ENCODE measurements at regions of chr4 and their contacts with region 1.

Region 1: GRCh38 chr4:73662709-73663546 is 42.7 kb upstream of the RASSF6 start:
- DNase-seq: peak in 3 of 4 experiments; percentile 19 to 58 (median 51)
- ATAC-seq: peak; percentile 89
- H3K4me3 ChIP-seq: no peak overlapping the region
- H3K27ac ChIP-seq: no peak overlapping the region
- H3K4me1 ChIP-seq: no peaks in the 10 kb centered on the region; a peak in 1 of 5 replicates
- H3K27me3 ChIP-seq: no peaks in the 10 kb centered on the region
- CTCF ChIP-seq: peak; percentile 48 to 81 (median 61); a peak in 5 of 6 replicates
- EP300 ChIP-seq: no peak
- POLR2A ChIP-seq: no peak
- RAD21 ChIP-seq: peak; percentile 87 to 89

Region 2: GRCh38 chr4:73606465-73606974 is 56.4 kb before region 1 on chr4:
- CTCF ChIA-PET with region 1: no interaction called
- POLR2A ChIA-PET with region 1: no interaction called
- in situ Hi-C with region 1: no loop called
- intact Hi-C with region 1: no loop called
- DNase-seq: no peak
- ATAC-seq: no peak
- H3K4me3 ChIP-seq: no peak overlapping the region
- H3K27ac ChIP-seq: no peak overlapping the region
- H3K4me1 ChIP-seq: no peaks in the 10 kb centered on the region
- H3K27me3 ChIP-seq: peaks cover 0 to 4% of the 10 kb centered on the region in 2 experiments; a peak in 1 of 5 replicates
- CTCF ChIP-seq: no peak
- EP300 ChIP-seq: no peak
- POLR2A ChIP-seq: no peak
- RAD21 ChIP-seq: no peak

Region 3: DNA sequence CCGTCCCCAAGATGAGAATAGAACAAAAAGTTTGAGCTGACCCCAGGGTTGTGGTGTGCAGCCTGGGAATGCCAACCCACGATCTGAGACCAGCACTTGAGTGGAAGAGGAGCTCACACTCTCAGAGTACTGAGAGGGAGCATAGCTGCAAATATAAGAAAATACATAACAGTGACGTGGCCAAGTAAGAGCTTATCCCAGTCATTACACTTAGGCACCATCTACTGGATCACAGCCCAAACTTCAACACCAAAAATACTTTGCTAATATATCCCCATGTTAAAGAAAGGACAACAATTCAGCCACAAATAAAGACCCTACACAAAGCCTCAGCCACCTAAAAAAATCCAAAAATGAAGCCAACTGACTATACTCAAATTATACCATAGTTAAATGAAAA is 140.3 kb after region 1 on chr4:
- CTCF ChIA-PET with region 1: no interaction called
- POLR2A ChIA-PET with region 1: no interaction called
- in situ Hi-C with region 1: no loop called
- intact Hi-C with region 1: loop called (anchors 1 kb)
- DNase-seq: peak in 1 of 4 experiments; percentile 12
- ATAC-seq: peak; percentile 75
- H3K4me3 ChIP-seq: no peak overlapping the region
- H3K27ac ChIP-seq: no peak overlapping the region
- H3K4me1 ChIP-seq: no peaks in the 10 kb centered on the region; a peak in 1 of 5 replicates
- H3K27me3 ChIP-seq: no peaks in the 10 kb centered on the region
- CTCF ChIP-seq: peak in 2 of 3 experiments; percentile 38 to 40; a peak in 3 of 6 replicates
- EP300 ChIP-seq: no peak
- POLR2A ChIP-seq: no peak
- RAD21 ChIP-seq: peak in 1 of 2 experiments; percentile 57; a peak in 2 of 4 replicates

Region 4: GRCh38 chr4:73922766-73923630 is 260.1 kb after region 1 on chr4:
- CTCF ChIA-PET with region 1: interaction called, 8 read pairs
- POLR2A ChIA-PET with region 1: no interaction called
- in situ Hi-C with region 1: no loop called
- intact Hi-C with region 1: loop called (anchors 1 kb)
- DNase-seq: peak in 1 of 4 experiments; percentile 36
- ATAC-seq: no peak
- H3K4me3 ChIP-seq: no peak overlapping the region
- H3K27ac ChIP-seq: no peak overlapping the region
- H3K4me1 ChIP-seq: no peaks in the 10 kb centered on the region; a peak in 1 of 5 replicates
- H3K27me3 ChIP-seq: no peaks in the 10 kb centered on the region
- CTCF ChIP-seq: peak in 1 of 3 experiments; percentile 58; a peak in 3 of 6 replicates
- EP300 ChIP-seq: no peak
- POLR2A ChIP-seq: no peak
- RAD21 ChIP-seq: peak; percentile 61 to 76

Region 5: DNA sequence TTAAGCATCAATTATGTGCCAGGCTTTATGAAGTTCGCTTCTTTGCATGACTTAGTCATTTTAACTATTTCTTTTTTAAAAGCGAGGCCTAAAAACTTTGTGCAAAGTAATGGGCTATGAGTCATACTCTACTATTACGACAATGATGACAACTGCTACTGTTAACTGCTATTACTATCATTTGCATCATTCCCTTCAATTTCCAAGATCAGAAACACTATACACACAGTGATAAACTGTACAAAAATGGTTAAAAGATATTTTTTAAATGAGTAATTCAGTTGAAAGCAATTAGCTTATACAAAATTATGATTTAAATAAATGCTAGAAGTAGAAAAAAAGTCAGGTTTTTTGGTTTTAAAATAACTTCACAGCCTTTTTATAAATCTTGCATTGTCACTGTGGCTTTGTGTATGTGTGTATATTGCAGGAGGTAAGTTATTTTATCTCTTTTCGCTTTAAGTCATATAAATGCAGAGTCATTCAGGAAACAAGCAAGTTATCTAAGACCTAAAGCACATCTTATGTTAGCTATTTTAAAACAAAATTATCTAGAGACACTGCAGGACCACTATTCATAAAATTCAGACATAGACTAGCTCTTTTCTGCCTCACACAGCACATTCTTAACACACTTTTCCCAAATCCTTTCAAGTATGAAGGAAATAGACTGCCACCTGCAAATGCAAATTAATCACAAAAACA is 394.1 kb after region 1 on chr4:
- CTCF ChIA-PET with region 1: no interaction called
- POLR2A ChIA-PET with region 1: no interaction called
- in situ Hi-C with region 1: no loop called
- intact Hi-C with region 1: loop called (anchors 1 kb)
- DNase-seq: peak; percentile 42 to 73 (median 59)
- ATAC-seq: peak; percentile 78
- H3K4me3 ChIP-seq: no peak overlapping the region
- H3K27ac ChIP-seq: peak overlapping the region; percentile 98
- H3K4me1 ChIP-seq: peaks cover 15 to 47% of the 10 kb centered on the region in 2 experiments
- H3K27me3 ChIP-seq: no peaks in the 10 kb centered on the region
- CTCF ChIP-seq: no peak
- EP300 ChIP-seq: peak; percentile 86
- POLR2A ChIP-seq: no peak
- RAD21 ChIP-seq: no peak